ENCODE measurements at regions of chr20 and their contacts with region 1.

Region 1: DNA sequence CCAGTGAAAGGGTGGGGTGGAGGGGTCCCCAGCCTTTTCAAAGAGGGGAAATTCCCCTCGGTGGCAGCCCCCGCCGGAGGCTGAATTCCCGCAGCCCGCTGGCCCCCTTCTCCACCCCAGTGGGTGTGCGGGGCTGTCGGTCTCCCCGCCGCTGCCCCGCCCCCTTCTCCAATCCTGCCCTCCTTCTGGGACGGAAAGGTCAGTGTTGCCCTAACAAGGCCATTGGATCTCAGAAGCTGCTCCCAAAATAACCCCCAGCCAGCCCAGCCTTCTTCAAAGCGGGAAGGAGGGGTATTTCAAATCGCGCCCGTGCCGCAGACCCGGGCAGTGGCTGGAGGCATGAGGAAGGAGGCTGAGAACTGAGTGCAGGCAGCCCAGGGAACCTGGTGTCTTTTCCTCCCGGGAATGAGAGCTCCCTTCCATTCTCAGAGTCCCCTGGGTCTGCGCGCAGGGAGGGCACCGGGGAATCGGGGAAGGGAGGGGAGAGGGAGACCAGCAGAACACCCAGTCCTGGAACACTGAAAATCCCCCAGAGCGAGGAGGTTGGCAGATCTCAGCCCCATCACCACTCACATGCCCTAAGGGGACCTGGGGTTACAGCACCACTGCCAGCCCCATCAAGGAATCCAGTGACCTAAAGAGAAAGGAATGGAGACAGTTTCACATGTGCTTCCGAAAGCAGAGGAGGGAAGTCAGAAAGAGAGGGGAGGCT is at the start of gene JPH2:
- DNase-seq: no peak
- ATAC-seq: no peak
- H3K4me3 ChIP-seq: no peak within 1 kb of the TSS
- H3K4me3 Mint-ChIP-seq: no peak within 1 kb of the TSS
- H3K27ac ChIP-seq: no peak within 1 kb of the TSS
- H3K27ac Mint-ChIP-seq: no peak within 1 kb of the TSS
- H3K4me1 ChIP-seq: peaks cover 18% of the 10 kb centered on the region
- H3K4me1 Mint-ChIP-seq: peaks cover 10% of the 10 kb centered on the region
- H3K27me3 ChIP-seq: peaks cover 28 to 51% of the 10 kb centered on the region in 2 experiments
- H3K27me3 Mint-ChIP-seq: peaks cover 74% of the 10 kb centered on the region
- CTCF ChIP-seq: no peak
- total RNA-seq, gene JPH2: not detected

Region 2: DNA sequence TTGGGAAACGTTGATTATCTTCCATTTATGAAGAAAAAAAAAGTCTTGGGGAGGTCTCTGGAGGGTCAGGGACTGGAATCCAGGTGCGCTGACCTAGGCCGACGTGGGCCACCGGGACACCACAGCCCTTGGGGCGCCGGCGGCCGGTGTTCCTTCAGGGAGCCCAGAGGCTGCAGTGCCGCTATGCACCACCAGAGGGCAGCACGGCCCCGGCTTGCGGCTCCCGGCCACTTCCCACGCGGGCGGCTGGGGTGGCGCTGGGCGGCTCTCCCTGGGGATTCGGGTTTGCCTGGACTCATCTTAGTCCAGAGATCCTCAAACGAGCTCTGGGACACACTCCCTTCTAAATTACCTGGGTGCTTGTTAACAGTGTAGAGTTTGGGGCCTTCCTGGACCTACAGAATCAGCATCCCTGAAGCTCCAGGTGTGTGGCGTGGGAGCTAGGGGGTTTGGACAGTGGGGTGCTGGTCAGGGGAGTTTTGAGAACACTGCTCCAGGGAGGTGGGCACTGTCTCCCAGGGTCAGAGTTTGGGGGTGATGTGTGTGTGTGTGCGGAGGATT is 437.4 kb before region 1 on chr20:
- CTCF ChIA-PET with region 1: no interaction called
- POLR2A ChIA-PET with region 1: no interaction called
- intact Hi-C with region 1: loop called (anchors 1 to 5 kb)
- DNase-seq: peak; percentile 54 to 92 (median 80)
- ATAC-seq: peak; percentile 84
- H3K4me3 ChIP-seq: no peak overlapping the region
- H3K4me3 Mint-ChIP-seq: no peak overlapping the region
- H3K27ac ChIP-seq: no peak overlapping the region
- H3K27ac Mint-ChIP-seq: no peak overlapping the region
- H3K4me1 ChIP-seq: peaks cover 33% of the 10 kb centered on the region
- H3K4me1 Mint-ChIP-seq: peaks cover 30% of the 10 kb centered on the region
- H3K27me3 ChIP-seq: no peaks in the 10 kb centered on the region
- H3K27me3 Mint-ChIP-seq: no peaks in the 10 kb centered on the region
- CTCF ChIP-seq: peak; percentile 99

Region 3: DNA sequence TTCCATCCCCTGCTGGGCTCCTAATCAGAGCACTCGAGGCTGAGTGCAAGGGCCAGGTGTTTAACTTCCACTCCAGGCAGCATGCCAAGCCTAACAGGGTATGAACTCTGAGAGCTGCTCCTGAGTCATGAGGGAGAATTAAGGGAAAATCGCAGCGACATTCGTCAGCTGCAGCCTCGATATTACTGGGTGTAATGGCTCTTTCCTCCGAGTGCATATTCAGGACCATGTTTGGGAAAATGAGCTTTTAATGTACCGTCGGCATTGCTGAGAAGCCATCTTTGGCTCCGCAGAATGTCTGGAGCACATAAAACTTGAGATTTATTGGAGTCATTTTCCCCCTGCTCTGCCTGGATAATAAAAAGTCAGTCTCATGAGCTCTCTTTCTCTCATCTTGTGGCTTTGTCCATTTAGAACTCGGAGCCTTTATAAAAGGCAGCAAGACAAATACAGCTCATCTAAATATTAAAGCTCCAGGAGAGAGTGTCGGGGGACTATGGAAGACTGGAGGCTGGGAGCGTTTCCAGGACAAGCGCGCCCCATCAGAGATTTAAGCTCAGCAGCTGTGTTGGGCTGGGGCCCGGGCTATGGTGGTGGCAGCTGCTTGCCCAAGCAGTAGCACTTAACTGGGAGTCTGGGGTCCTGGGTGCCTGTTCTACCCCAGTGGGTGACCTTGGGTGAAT is 168.8 kb before region 1 on chr20:
- CTCF ChIA-PET with region 1: no interaction called
- POLR2A ChIA-PET with region 1: no interaction called
- intact Hi-C with region 1: no loop called
- DNase-seq: no peak
- ATAC-seq: no peak
- H3K4me3 ChIP-seq: no peak overlapping the region
- H3K4me3 Mint-ChIP-seq: no peak overlapping the region
- H3K27ac ChIP-seq: no peak overlapping the region
- H3K27ac Mint-ChIP-seq: no peak overlapping the region
- H3K4me1 ChIP-seq: peaks cover 32% of the 10 kb centered on the region
- H3K4me1 Mint-ChIP-seq: peaks cover 62% of the 10 kb centered on the region
- H3K27me3 ChIP-seq: peaks cover 0 to 3% of the 10 kb centered on the region in 2 experiments
- H3K27me3 Mint-ChIP-seq: no peaks in the 10 kb centered on the region
- CTCF ChIP-seq: no peak

Region 4: DNA sequence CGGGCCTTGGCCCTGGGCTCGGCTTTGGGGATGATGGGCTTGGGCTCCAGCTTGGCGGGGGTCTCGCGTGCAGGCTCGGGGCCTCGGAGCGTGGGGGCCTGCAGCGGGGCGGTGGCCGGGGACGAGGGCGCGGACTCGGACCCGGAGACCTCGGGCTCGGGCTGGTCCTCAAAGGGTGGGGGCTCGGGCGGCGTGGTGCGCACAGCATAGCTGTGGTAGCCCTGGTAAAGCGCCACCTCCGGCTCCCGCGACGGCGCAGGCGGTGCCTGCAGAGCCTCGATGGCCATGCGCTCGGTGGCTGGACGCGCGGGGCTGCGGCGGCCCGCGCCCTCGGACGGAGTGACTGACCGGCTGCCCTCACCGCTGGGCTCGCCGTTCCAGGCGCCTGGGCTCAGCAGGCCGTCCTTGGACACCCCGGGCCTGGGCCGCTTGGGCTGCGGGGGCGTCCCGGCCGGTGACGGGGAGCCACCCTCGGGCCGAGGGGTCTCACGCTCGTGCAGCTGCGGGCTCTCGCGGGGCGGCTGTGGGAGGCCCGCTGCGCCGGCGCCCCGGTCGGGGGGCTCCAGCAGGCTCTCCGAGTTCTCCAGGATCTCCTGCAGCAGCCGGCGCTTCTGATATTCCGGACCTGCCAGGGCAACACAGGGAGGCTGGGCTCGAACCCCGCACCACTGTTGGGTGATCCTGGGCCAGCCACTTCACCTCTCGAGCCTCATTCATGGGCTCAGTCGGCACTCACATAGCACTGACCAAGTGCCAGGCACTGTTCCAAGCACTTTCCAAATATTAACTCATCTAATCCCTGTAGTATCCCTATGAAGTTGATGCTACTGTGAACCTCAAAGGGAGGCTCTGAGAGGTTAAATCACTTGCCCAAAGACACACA is 71.2 kb before region 1 on chr20:
- CTCF ChIA-PET with region 1: interaction called, 43 read pairs
- POLR2A ChIA-PET with region 1: interaction called, 11 read pairs
- intact Hi-C with region 1: loop called (anchors 1 kb)
- DNase-seq: no peak
- ATAC-seq: peak; percentile 21
- H3K4me3 ChIP-seq: no peak overlapping the region
- H3K4me3 Mint-ChIP-seq: no peak overlapping the region
- H3K27ac ChIP-seq: no peak overlapping the region
- H3K27ac Mint-ChIP-seq: no peak overlapping the region
- H3K4me1 ChIP-seq: peaks cover 4% of the 10 kb centered on the region
- H3K4me1 Mint-ChIP-seq: peaks cover 9% of the 10 kb centered on the region
- H3K27me3 ChIP-seq: peaks cover 19 to 20% of the 10 kb centered on the region in 2 experiments
- H3K27me3 Mint-ChIP-seq: peaks cover 53% of the 10 kb centered on the region
- CTCF ChIP-seq: no peak

Region 5: DNA sequence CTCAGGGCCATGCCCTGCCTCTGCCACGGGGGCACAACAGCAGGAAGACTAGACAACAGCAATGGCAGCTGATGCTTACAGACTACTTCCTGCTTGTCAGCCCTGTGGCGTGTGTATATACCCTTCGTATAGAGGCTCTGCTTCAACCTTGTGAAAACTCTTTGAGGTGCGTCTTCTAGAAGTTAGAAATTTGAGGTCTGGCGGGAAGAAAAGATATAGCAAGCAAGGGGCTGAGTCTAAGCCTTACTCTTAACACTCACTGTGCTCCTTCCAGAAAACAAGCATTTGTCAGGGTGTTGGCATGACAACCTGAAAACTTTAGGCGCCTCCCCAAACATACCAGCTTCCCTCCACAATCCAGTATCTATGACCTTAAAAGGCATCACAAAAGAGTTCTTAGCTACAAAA is 33.6 kb before region 1 on chr20:
- CTCF ChIA-PET with region 1: interaction called, 3 read pairs
- POLR2A ChIA-PET with region 1: no interaction called
- intact Hi-C with region 1: loop called in 1 of 2 experiments (anchors 5 kb)
- DNase-seq: peak in 12 of 14 experiments; percentile 5 to 82 (median 32)
- ATAC-seq: peak; percentile 93
- H3K4me3 ChIP-seq: no peak overlapping the region
- H3K4me3 Mint-ChIP-seq: peak overlapping the region; percentile 35
- H3K27ac ChIP-seq: peak overlapping the region; percentile 36 to 73
- H3K27ac Mint-ChIP-seq: peak overlapping the region; percentile 83
- H3K4me1 ChIP-seq: peaks cover 16% of the 10 kb centered on the region
- H3K4me1 Mint-ChIP-seq: peaks cover 15% of the 10 kb centered on the region
- H3K27me3 ChIP-seq: peaks cover 1 to 8% of the 10 kb centered on the region in 2 experiments
- H3K27me3 Mint-ChIP-seq: peaks cover 22% of the 10 kb centered on the region
- CTCF ChIP-seq: no peak